ENCODE measurements at regions of chr19 and their contacts with region 1.

Region 1: GRCh38 chr19:48835734-48836088 is 580 bp downstream of the HSD17B14 start:
- DNase-seq: peak; percentile 95 to 97
- ATAC-seq: peak; percentile 98 to 100 (median 98)
- H3K4me3 ChIP-seq: peak overlapping the region; percentile 44
- H3K27ac ChIP-seq: no peak overlapping the region
- H3K4me1 ChIP-seq: no peaks in the 10 kb centered on the region
- H3K27me3 ChIP-seq: no peaks in the 10 kb centered on the region
- CTCF ChIP-seq: peak; percentile 91

Region 2: DNA sequence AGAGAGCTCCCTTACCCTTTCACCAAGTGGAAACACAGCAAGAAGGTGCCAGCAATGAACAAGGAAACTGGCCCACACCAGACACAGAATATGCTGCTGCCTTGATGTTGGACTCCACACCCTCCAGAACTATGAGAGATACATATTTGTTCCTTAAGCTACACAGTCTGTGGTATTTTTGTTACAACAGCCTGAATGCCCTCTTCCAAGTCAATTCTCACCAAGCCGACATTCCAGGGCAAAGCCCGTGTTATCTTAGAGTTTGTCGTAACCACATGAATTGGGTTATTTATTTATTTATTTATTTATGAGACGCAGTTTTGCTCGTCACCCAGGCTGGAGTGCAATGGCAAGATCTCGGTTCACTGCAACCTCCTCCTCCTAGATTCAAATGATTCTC is 65.5 kb before region 1 on chr19:
- intact Hi-C with region 1: no loop called
- DNase-seq: no peak
- ATAC-seq: no peak
- H3K4me3 ChIP-seq: no peak overlapping the region
- H3K27ac ChIP-seq: peak overlapping the region; percentile 88
- H3K4me1 ChIP-seq: peaks cover 42% of the 10 kb centered on the region
- H3K27me3 ChIP-seq: no peaks in the 10 kb centered on the region
- CTCF ChIP-seq: no peak

Region 3: DNA sequence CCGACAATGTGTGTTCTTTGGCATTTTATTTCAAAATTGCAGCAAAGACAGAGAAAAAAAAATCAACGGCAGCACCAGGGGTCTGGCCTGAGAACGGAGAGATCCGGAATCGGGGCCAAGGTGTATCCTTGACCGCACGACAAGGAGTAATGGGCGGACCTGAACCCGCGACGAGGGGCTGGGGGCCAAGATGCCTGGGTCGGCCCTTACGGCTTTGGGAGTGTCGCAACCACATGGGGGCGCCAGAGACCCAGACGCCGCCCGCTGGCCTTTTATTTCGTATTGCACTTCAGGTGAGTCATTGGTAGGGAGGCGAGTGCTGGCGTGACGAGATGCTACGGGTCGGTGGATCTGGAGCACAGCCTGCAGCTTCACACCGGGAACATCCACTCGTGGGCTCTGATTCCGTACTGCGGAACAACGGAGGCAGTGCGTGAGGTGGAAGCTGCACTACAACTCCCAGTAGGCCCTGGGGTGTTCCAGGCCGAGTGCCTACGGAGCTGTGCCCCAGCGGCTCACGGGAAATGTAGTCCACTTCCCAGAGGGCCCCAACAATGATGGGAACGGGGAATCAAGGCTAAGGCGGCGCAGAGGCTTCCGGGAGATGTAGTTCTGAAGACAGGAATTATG is 40.5 kb before region 1 on chr19:
- intact Hi-C with region 1: loop called (anchors 1 to 2 kb)
- DNase-seq: peak; percentile 90 to 95
- ATAC-seq: peak; percentile 97
- H3K4me3 ChIP-seq: peak overlapping the region; percentile 70
- H3K27ac ChIP-seq: peak overlapping the region; percentile 84
- H3K4me1 ChIP-seq: peaks cover 7% of the 10 kb centered on the region
- H3K27me3 ChIP-seq: no peaks in the 10 kb centered on the region
- CTCF ChIP-seq: peak; percentile 98